ENCODE measurements at regions of chr11 and their contacts with region 1.

Region 1: DNA sequence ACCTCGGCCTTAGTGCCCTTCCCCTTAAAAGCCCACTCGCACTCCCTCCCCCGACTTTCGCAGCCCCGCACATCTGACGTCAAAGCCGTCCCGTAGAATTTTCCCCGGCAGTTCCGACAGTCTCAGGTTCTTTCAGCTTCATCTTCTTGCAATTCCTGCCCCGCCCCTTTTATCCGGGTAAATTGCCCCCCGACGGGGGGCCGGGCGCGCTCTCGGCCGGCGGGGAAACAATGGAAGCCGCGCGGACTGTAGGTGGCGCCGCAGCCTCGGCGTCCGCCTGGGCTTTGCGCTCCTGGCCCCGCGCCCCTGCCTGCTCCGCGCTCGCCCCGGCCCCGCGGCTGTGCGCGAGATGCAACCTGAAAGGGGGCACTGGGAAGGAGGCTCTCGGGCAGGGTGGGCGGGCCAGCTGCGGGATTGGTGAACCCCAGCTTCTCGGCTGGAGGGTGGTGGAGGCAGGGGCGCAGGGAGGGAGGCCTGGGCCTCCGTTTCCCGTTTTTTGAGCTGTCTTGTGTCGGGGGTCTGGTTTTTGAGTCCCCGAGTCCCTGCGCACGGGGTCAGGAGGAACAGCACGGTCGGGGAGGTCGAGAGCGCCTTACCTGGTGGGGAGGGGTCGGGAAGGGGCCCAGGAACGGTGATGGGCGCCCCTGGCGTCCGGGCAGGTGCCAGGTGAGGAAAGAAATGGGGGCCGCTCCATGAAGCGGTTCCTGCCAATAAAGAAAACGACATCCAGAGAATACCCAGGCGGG is 859 bp upstream of the FGF19 start:
- DNase-seq: peak; percentile 23
- H3K4me3 Mint-ChIP-seq: peak overlapping the region; percentile 49
- H3K27ac Mint-ChIP-seq: no peak overlapping the region
- H3K4me1 Mint-ChIP-seq: peaks cover 8% of the 10 kb centered on the region
- H3K27me3 Mint-ChIP-seq: peaks cover 29% of the 10 kb centered on the region

Region 2: GRCh38 chr11:69801519-69802335 is 97.0 kb after region 1 on chr11:
- CTCF ChIA-PET with region 1: no interaction called
- intact Hi-C with region 1: loop called (anchors 5 kb)
- DNase-seq: peak; percentile 45
- H3K4me3 Mint-ChIP-seq: no peak overlapping the region
- H3K27ac Mint-ChIP-seq: no peak overlapping the region
- H3K4me1 Mint-ChIP-seq: no peaks in the 10 kb centered on the region
- H3K27me3 Mint-ChIP-seq: no peaks in the 10 kb centered on the region

Region 3: GRCh38 chr11:69841859-69842698 is 137.4 kb after region 1 on chr11:
- CTCF ChIA-PET with region 1: no interaction called
- intact Hi-C with region 1: loop called (anchors 5 kb)
- DNase-seq: peak; percentile 46
- H3K4me3 Mint-ChIP-seq: no peak overlapping the region
- H3K27ac Mint-ChIP-seq: no peak overlapping the region
- H3K4me1 Mint-ChIP-seq: no peaks in the 10 kb centered on the region
- H3K27me3 Mint-ChIP-seq: peaks cover 13% of the 10 kb centered on the region

Region 4: GRCh38 chr11:69888483-69889076 is 183.9 kb after region 1 on chr11:
- CTCF ChIA-PET with region 1: interaction called, 6 read pairs
- intact Hi-C with region 1: loop called (anchors 1 kb)
- DNase-seq: peak; percentile 81
- H3K4me3 Mint-ChIP-seq: no peak overlapping the region
- H3K27ac Mint-ChIP-seq: no peak overlapping the region
- H3K4me1 Mint-ChIP-seq: peaks cover 3% of the 10 kb centered on the region
- H3K27me3 Mint-ChIP-seq: peaks cover 26% of the 10 kb centered on the region